ENCODE measurements at regions of chr16 and their contacts with region 1.

Region 1: DNA sequence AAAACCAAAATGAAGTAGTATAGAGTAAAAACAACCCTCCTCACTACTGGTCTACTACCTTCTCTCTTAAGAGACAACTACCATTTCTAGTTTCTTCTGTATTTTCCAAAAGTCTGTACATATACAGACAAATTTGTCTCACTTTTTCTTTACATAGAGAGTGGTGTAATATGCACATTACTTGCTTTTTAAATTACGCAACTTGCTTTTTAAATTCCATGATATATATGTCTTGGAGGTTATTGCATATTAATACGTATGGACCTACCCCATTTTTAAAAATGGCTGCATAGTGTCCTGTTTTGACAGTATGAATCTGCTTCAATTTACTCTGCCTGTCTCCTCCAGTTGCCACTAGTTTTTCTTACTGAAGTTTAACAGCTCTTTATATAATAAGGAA is 42.5 kb upstream of the AQP8 start:
- DNase-seq: no peak
- H3K4me3 ChIP-seq: no peak overlapping the region
- H3K27ac ChIP-seq: no peak overlapping the region
- H3K4me1 ChIP-seq: no peaks in the 10 kb centered on the region
- H3K27me3 ChIP-seq: no peaks in the 10 kb centered on the region
- CTCF ChIP-seq: no peak

Region 2: DNA sequence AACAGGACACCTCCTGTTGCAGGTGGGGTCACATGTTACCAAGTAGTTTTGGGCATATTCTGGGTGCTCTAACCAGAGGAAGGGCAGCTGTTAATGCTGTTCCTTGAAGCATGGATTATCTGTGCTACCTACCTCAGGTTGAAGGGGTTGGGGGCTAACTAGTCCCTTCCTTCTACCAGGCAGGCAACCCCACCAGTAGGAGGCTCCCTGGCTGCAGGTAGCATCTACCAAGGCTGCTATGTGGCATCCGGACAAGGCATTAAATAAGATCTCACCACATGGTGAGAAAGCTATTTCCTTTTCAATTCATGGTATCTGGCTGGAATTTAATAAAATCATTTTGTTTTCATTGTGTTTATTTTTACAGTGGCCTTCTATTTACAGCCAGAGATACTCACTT is 855.6 kb before region 1 on chr16:
- CTCF ChIA-PET with region 1: interaction called, 19 read pairs
- POLR2A ChIA-PET with region 1: no interaction called
- intact Hi-C with region 1: no loop called
- DNase-seq: no peak
- H3K4me3 ChIP-seq: no peak overlapping the region
- H3K27ac ChIP-seq: no peak overlapping the region
- H3K4me1 ChIP-seq: no peaks in the 10 kb centered on the region
- H3K27me3 ChIP-seq: peaks cover 53% of the 10 kb centered on the region
- CTCF ChIP-seq: no peak

Region 3: DNA sequence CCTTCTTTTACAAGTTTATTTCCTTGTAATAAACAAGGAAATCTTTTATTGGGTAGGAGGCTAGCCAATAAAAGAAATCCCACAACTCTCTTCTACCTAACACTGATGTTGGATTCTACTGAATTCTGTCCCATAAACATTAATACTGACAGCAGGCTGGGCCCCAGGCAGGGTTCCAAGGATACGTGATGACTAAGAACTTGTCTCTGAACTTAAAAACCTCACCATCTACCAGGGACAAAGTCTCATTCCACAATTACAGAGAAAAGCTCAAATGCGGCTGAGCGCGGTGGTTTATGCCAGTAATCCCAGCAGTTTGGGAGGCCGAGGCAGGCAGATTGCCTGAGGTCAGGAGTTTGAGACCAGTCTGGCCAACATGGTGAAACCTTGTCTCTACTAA is 224.0 kb before region 1 on chr16:
- CTCF ChIA-PET with region 1: no interaction called
- POLR2A ChIA-PET with region 1: no interaction called
- intact Hi-C with region 1: no loop called
- DNase-seq: no peak
- H3K4me3 ChIP-seq: no peak overlapping the region
- H3K27ac ChIP-seq: no peak overlapping the region
- H3K4me1 ChIP-seq: no peaks in the 10 kb centered on the region
- H3K27me3 ChIP-seq: no peaks in the 10 kb centered on the region
- CTCF ChIP-seq: no peak

Region 4: GRCh38 chr16:25143928-25144327 is 30.4 kb before region 1 on chr16:
- CTCF ChIA-PET with region 1: no interaction called
- POLR2A ChIA-PET with region 1: no interaction called
- intact Hi-C with region 1: no loop called
- DNase-seq: no peak
- H3K4me3 ChIP-seq: no peak overlapping the region
- H3K27ac ChIP-seq: no peak overlapping the region
- H3K4me1 ChIP-seq: no peaks in the 10 kb centered on the region
- H3K27me3 ChIP-seq: no peaks in the 10 kb centered on the region
- CTCF ChIP-seq: peak; percentile 47

Region 5: DNA sequence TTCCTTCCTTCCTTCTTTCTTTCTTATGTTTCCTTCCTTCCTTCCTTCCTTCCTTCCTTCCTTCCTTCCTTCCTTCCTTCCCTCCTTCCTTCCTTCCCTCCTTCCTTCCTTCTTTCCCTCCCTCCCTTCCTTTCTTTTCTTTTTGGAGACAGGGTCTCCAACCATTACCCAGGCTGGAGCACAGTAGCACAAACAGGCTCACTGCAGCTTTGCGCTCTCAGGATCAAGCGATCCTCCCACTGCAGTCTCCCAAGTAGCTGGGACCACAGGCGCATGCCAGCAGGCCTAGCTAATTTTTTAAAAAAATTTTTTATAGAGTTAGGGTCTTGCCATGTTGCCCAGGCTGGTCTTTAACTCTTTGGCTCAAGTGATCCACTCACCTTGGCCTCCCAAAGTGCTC is 115.2 kb after region 1 on chr16:
- CTCF ChIA-PET with region 1: no interaction called
- POLR2A ChIA-PET with region 1: no interaction called
- intact Hi-C with region 1: no loop called
- DNase-seq: no peak
- H3K4me3 ChIP-seq: no peak overlapping the region
- H3K27ac ChIP-seq: no peak overlapping the region
- H3K4me1 ChIP-seq: no peaks in the 10 kb centered on the region
- H3K27me3 ChIP-seq: peaks cover 55% of the 10 kb centered on the region
- CTCF ChIP-seq: no peak

Measured in PC-9 (cell line).